ENCODE measurements at regions of chr7 and their contacts with region 1.

Region 1: DNA sequence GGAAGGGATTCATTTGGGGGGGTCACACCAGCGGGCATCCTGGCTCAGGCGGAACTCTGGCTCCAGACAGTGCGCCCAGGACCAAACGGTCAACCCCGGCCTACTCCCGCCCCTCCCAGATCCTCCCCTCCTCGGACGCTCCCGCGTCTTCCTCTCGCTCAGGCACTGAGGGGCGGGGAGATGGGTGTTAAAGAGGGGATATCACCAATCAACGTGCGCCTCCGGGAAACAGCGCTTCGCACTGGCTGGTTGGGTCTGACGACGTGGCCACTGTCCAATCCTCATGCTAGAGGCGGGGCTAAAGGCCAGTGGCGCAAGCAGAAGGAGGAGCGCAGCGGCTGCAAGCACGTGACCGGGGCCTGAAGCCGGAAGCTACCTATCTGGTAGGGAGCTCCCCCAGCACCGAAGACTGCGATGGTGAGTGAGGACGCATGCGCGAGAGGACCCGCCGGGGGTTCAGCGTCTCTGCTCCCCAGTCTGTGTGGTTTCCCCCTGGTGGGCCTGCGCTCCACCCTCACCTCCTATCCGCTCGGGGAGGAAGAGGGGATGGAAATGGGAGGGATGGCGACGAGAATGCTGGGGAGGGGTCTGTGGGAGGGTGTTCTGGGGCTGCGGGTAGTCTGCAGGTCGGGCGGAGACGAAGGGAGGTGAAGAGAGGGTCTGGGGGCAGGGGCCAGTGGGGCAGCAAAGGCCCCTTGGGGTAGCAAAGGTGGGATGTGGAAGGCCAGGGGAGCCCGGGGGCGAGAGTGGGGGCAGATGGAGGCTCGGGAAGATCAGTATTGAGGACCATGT is at the start of gene LAMTOR4:
- DNase-seq: peak; percentile 99
- ATAC-seq: peak; percentile 98
- H3K4me3 Mint-ChIP-seq: peak within 1 kb of the TSS; percentile 94
- H3K27ac Mint-ChIP-seq: peak within 1 kb of the TSS; percentile 97
- H3K4me1 Mint-ChIP-seq: peaks cover 29% of the 10 kb centered on the region
- H3K27me3 Mint-ChIP-seq: no peaks in the 10 kb centered on the region
- total RNA-seq, gene LAMTOR4: 69.6 to 120 TPM

Region 2: DNA sequence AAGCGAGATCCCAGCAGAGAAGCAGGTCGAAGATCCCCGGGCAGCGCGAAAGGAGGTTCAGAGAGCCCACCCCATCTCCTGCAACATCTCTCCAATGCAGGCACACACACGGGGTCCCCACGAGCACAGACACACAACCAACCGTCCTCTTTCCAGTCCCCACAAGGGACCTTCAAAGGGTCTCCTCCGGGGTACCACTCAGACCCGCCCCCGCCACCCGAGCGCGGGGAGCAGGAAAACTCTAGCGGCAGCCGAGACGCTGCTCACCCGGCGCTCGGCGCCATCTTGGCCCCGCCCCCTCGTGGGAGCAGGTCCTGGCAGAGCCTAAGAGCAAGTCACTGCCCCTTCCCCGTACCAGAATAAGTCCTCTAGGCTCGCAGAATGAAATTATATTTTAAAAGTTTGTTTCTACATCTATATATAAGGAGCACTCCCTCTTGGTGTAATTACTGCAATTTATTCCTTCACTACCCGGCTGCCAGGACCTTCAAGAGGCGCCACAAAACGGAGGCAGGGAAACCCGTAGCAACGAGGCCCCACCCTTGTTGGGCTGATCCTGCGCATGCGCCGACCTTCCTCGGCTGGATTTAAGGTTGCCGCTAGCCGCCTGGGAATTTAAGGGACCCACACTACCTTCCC is 29.6 kb before region 1 on chr7 and contains the starts of genes CNPY4 and TAF6:
- CTCF ChIA-PET with region 1: no interaction called
- POLR2A ChIA-PET with region 1: no interaction called
- intact Hi-C with region 1: loop called (anchors 1 kb)
- DNase-seq: peak; percentile 97
- ATAC-seq: peak; percentile 68
- H3K4me3 Mint-ChIP-seq: peak within 1 kb of the TSS; percentile 86
- H3K27ac Mint-ChIP-seq: peak within 1 kb of the TSS; percentile 94
- H3K4me1 Mint-ChIP-seq: peaks cover 19% of the 10 kb centered on the region
- H3K27me3 Mint-ChIP-seq: no peaks in the 10 kb centered on the region
- total RNA-seq, gene CNPY4: 11.0 to 14.0 TPM
- total RNA-seq, gene TAF6: 54.3 to 59.5 TPM

Region 3: GRCh38 chr7:100167921-100168323 is 19.2 kb after region 1 on chr7:
- CTCF ChIA-PET with region 1: no interaction called
- POLR2A ChIA-PET with region 1: interaction called, 11 read pairs
- intact Hi-C with region 1: no loop called
- DNase-seq: peak; percentile 28
- ATAC-seq: peak; percentile 8
- H3K4me3 Mint-ChIP-seq: peak overlapping the region; percentile 70
- H3K27ac Mint-ChIP-seq: peak overlapping the region; percentile 82
- H3K4me1 Mint-ChIP-seq: peaks cover 74% of the 10 kb centered on the region
- H3K27me3 Mint-ChIP-seq: no peaks in the 10 kb centered on the region

Region 4: DNA sequence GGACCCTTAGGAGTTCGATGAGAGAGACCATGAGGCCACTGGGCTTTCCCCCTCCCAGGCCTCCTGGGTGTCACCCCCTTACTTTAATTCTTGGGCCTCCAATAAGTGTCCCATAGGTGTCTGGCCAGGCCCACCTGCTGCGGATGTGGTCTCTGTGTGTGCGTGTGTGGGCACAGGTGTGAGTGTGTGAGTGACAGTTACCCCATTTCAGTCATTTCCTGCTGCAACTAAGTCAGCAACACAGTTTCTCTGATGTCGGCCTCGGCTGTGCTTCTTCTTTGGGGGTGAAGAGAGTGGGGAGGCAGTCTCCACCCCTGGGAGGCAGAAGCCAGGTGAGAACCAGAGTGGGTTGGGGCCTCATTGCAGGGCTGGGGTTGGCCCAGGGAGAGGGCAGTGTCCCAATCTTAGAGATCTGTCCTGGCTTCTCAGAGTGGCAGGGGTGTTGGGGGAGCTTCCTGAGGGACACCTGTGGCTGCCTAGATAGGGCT is 72.5 kb after region 1 on chr7:
- CTCF ChIA-PET with region 1: no interaction called
- POLR2A ChIA-PET with region 1: no interaction called
- intact Hi-C with region 1: loop called in 1 of 2 experiments (anchors 1 kb)
- DNase-seq: peak; percentile 81
- ATAC-seq: peak; percentile 57
- H3K4me3 Mint-ChIP-seq: peak overlapping the region; percentile 96
- H3K27ac Mint-ChIP-seq: peak overlapping the region; percentile 90
- H3K4me1 Mint-ChIP-seq: peaks cover 47% of the 10 kb centered on the region
- H3K27me3 Mint-ChIP-seq: no peaks in the 10 kb centered on the region

Region 5: GRCh38 chr7:100342765-100343164 is 194.0 kb after region 1 on chr7:
- CTCF ChIA-PET with region 1: no interaction called
- POLR2A ChIA-PET with region 1: interaction called, 3 read pairs
- intact Hi-C with region 1: loop called (anchors 1 to 10 kb)
- DNase-seq: no peak
- ATAC-seq: no peak
- H3K4me3 Mint-ChIP-seq: no peak overlapping the region
- H3K27ac Mint-ChIP-seq: peak overlapping the region; percentile 59
- H3K4me1 Mint-ChIP-seq: peaks cover 44% of the 10 kb centered on the region
- H3K27me3 Mint-ChIP-seq: no peaks in the 10 kb centered on the region